CD8-positive, alpha-beta memory T cell (primary cell): ENCODE measurements at regions of chr10 and their contacts with region 1.

Region 1: GRCh38 chr10:80504158-80504811 is 33.4 kb upstream of the SH2D4B start:
- DNase-seq: no peak
- H3K4me3 ChIP-seq: no peak overlapping the region
- H3K4me3 Mint-ChIP-seq: peak overlapping the region in 5 of 7 donors; percentile 3 to 61 (median 38)
- H3K27ac ChIP-seq: no peak overlapping the region
- H3K27ac Mint-ChIP-seq: peak overlapping the region; percentile 84 to 98 (median 93)
- H3K4me1 ChIP-seq: peaks cover 70% of the 10 kb centered on the region
- H3K4me1 Mint-ChIP-seq: peaks cover 69 to 78% (median 73%) of the 10 kb centered on the region in 3 donors
- H3K27me3 ChIP-seq: no peaks in the 10 kb centered on the region
- H3K27me3 Mint-ChIP-seq: no peaks in the 10 kb centered on the region

Region 2: GRCh38 chr10:80382989-80383388 is 121.3 kb before region 1 on chr10:
- CTCF ChIA-PET with region 1: interaction called, 17 read pairs
- POLR2A ChIA-PET with region 1: no interaction called
- DNase-seq: peak; percentile 13 to 61 (median 48)
- H3K4me3 ChIP-seq: no peak overlapping the region
- H3K4me3 Mint-ChIP-seq: no peak overlapping the region
- H3K27ac ChIP-seq: no peak overlapping the region
- H3K27ac Mint-ChIP-seq: peak overlapping the region in 3 of 8 donors; percentile 12 to 38 (median 17)
- H3K4me1 ChIP-seq: peaks cover 8% of the 10 kb centered on the region
- H3K4me1 Mint-ChIP-seq: peaks cover 11 to 15% (median 11%) of the 10 kb centered on the region in 3 donors
- H3K27me3 ChIP-seq: no peaks in the 10 kb centered on the region
- H3K27me3 Mint-ChIP-seq: peaks cover 0 to 17% of the 10 kb centered on the region in 2 donors

Region 3: DNA sequence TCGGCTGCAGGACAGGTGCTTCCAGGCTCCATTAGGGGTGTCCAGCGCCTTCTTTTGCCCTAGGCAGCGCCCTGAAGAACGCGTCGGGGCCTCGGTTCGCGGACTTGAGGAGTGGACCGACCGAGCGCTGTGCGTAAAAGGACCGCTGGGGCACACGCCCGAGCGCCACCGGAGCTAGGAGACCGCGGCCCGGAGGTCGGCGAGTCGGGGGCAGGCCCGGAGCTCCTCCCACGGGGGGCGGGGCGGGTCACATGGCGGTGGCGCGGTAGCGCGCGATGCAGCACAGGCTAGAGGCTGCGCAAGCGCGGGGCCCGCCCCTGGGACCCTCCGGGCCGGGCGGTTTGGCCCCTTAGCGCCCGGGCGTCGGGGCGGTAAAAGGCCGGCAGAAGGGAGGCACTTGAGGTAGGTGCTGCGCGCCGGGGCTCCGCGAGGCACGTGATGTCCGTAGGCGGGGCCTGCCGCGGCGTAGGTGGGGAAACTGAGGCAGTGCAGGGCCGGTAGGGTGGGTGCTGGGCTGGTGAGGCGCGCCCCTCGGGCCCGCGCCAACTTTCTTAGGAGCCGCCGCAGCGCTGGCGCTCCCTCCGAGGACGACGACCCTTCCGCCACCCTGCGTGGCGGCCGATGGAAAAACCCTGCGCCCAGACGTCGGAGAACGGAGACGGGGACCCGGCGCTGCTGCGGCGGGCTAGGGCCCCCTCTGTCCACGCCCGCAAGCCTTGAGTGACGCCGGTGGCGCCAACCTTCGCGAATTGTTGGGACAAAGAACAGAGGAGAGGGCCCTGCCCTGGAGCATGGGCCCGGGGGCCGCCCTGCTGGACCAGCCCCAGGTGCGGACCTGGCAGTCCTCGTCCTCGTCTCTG is 95.8 kb before region 1 on chr10 and contains the start of gene PRXL2A:
- CTCF ChIA-PET with region 1: interaction called, 22 read pairs
- POLR2A ChIA-PET with region 1: interaction called, 5 read pairs
- DNase-seq: peak; percentile 67 to 85 (median 79)
- H3K4me3 ChIP-seq: peak within 1 kb of the TSS; percentile 88
- H3K4me3 Mint-ChIP-seq: peak within 1 kb of the TSS; percentile 88 to 93 (median 92)
- H3K27ac ChIP-seq: no peak within 1 kb of the TSS
- H3K27ac Mint-ChIP-seq: peak within 1 kb of the TSS in 7 of 8 donors; percentile 30 to 90 (median 79)
- H3K4me1 ChIP-seq: peaks cover 7% of the 10 kb centered on the region
- H3K4me1 Mint-ChIP-seq: peaks cover 10 to 22% (median 15%) of the 10 kb centered on the region in 3 donors
- H3K27me3 ChIP-seq: no peaks in the 10 kb centered on the region
- H3K27me3 Mint-ChIP-seq: peaks cover 0 to 1% of the 10 kb centered on the region in 2 donors
- total RNA-seq, gene PRXL2A: 8.1 to 8.3 TPM

Region 4: DNA sequence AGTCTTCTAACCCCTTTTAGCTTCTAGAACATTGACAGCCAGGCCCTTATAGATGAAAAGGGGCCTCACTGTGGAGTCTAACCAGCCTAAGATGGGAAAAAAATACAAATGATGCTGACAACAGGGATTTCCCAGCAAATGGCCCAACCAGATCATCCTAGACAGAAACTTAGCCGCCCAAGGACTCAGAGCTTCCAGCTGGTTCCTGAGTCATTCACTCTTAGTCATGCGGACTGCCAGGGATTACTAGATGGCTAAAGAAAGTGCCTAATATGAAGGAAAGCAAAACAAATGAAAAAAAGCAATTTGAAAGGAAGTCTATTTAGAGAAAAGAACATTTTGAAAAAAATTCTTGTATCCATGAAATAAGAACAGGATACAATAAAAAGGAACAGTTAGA is 26.5 kb before region 1 on chr10:
- CTCF ChIA-PET with region 1: interaction called, 498 read pairs
- POLR2A ChIA-PET with region 1: interaction called, 6 read pairs
- DNase-seq: no peak
- H3K4me3 ChIP-seq: no peak overlapping the region
- H3K4me3 Mint-ChIP-seq: peak overlapping the region in 2 of 7 donors; percentile 14 to 37
- H3K27ac ChIP-seq: no peak overlapping the region
- H3K27ac Mint-ChIP-seq: peak overlapping the region in 7 of 8 donors; percentile 48 to 91 (median 64)
- H3K4me1 ChIP-seq: peaks cover 51% of the 10 kb centered on the region
- H3K4me1 Mint-ChIP-seq: peaks cover 65 to 83% (median 83%) of the 10 kb centered on the region in 3 donors
- H3K27me3 ChIP-seq: no peaks in the 10 kb centered on the region
- H3K27me3 Mint-ChIP-seq: no peaks in the 10 kb centered on the region

Region 5: GRCh38 chr10:80493522-80494051 is 10.7 kb before region 1 on chr10:
- CTCF ChIA-PET with region 1: interaction called, 96 read pairs
- POLR2A ChIA-PET with region 1: interaction called, 4 read pairs
- DNase-seq: peak in 2 of 5 donors; percentile 37 to 67
- H3K4me3 ChIP-seq: peak overlapping the region; percentile 2
- H3K4me3 Mint-ChIP-seq: peak overlapping the region; percentile 0 to 71 (median 60)
- H3K27ac ChIP-seq: no peak overlapping the region
- H3K27ac Mint-ChIP-seq: peak overlapping the region; percentile 5 to 99 (median 84)
- H3K4me1 ChIP-seq: peaks cover 97% of the 10 kb centered on the region
- H3K4me1 Mint-ChIP-seq: peaks cover 98 to 100% (median 100%) of the 10 kb centered on the region in 3 donors
- H3K27me3 ChIP-seq: no peaks in the 10 kb centered on the region
- H3K27me3 Mint-ChIP-seq: peaks cover 0 to 3% of the 10 kb centered on the region in 2 donors

Region 6: GRCh38 chr10:80518807-80519360 is 14.6 kb after region 1 on chr10:
- CTCF ChIA-PET with region 1: interaction called, 16 read pairs
- POLR2A ChIA-PET with region 1: no interaction called
- DNase-seq: no peak
- H3K4me3 ChIP-seq: no peak overlapping the region
- H3K4me3 Mint-ChIP-seq: no peak overlapping the region
- H3K27ac ChIP-seq: no peak overlapping the region
- H3K27ac Mint-ChIP-seq: peak overlapping the region in 6 of 8 donors; percentile 19 to 81 (median 64)
- H3K4me1 ChIP-seq: peaks cover 10% of the 10 kb centered on the region
- H3K4me1 Mint-ChIP-seq: peaks cover 16 to 33% (median 29%) of the 10 kb centered on the region in 3 donors
- H3K27me3 ChIP-seq: no peaks in the 10 kb centered on the region
- H3K27me3 Mint-ChIP-seq: peaks cover 0 to 1% of the 10 kb centered on the region in 2 donors